PC-9 (cell line): ENCODE measurements at regions of chr2 and their contacts with region 1.

Region 1: DNA sequence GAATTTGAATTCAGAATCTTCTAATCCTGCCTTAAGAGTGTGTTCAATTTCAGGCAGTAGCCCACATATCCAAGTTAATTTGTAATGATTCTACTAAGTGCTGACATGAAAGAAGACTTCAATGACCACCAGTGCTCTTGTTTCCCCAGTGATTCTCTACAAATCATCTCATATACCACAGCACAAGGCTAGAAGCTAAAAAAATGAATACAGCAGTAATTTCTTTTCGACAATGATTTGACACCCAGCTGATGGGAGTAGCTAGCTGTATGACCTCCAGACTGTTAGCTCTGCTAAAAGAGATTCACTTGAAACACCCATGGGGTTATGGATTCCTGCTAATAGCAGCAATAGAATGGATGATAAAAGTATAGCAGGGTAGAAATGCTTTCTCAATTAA is 217.0 kb upstream of the TMEFF2 start:
- DNase-seq: no peak
- H3K4me3 ChIP-seq: no peak overlapping the region
- H3K27ac ChIP-seq: no peak overlapping the region
- H3K4me1 ChIP-seq: no peaks in the 10 kb centered on the region
- H3K27me3 ChIP-seq: no peaks in the 10 kb centered on the region
- CTCF ChIP-seq: no peak

Region 2: DNA sequence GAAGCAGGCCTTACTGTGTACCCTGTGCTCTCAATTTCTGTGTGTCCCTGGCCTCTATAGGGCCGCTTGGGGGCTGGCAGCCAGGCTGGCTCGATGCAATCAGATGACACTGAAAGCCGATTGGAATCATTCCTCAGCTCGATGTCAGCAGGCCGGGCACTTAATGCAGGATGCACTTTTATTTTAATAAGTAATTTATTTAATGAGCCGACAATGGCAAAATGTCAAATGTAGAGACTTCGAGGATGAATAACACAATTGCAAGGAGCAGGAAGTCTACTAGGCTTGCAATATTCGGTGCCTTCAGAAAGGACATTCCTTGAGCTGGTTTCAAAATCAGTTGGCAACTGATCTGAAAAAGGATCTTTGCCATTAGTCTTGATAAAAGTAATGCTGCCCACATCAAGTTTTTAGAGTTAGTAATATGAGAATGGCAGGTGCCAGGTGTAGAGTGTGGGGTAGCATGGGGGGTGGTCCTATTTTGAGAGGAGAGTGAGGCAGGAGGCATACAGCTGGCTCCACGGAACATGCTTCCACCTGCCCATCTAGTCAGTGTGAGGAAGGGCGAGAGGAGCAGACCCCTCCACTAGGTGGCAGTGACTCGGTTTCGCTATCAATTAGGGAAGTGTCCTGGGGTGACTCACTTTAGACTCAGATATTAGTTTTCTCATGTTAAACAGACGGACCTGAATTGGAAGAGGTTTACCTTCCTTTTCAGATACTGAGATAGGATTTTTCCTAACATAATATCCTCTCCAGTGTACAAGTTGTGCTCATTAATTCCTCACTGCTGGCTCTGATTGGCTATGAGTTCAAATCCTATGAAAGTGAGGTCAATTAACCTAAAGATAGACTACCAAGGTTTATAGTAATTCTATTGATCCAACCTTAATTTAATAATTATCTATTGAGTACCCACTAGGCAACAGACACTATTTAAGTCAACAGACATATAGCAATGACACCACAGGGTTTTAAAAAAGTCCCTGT is 652.9 kb before region 1 on chr2:
- CTCF ChIA-PET with region 1: no interaction called
- POLR2A ChIA-PET with region 1: no interaction called
- intact Hi-C with region 1: no loop called
- DNase-seq: peak in 1 of 2 experiments; percentile 58
- H3K4me3 ChIP-seq: no peak overlapping the region
- H3K27ac ChIP-seq: no peak overlapping the region
- H3K4me1 ChIP-seq: no peaks in the 10 kb centered on the region
- H3K27me3 ChIP-seq: no peaks in the 10 kb centered on the region
- CTCF ChIP-seq: peak; percentile 63

Region 3: GRCh38 chr2:192123847-192124246 is 287.9 kb before region 1 on chr2:
- CTCF ChIA-PET with region 1: no interaction called
- POLR2A ChIA-PET with region 1: no interaction called
- intact Hi-C with region 1: no loop called
- DNase-seq: no peak
- H3K4me3 ChIP-seq: no peak overlapping the region
- H3K27ac ChIP-seq: no peak overlapping the region
- H3K4me1 ChIP-seq: no peaks in the 10 kb centered on the region
- H3K27me3 ChIP-seq: no peaks in the 10 kb centered on the region
- CTCF ChIP-seq: no peak

Region 4: GRCh38 chr2:192390401-192390800 is 21.4 kb before region 1 on chr2:
- CTCF ChIA-PET with region 1: no interaction called
- POLR2A ChIA-PET with region 1: no interaction called
- intact Hi-C with region 1: loop called (anchors 1 kb)
- DNase-seq: no peak
- H3K4me3 ChIP-seq: no peak overlapping the region
- H3K27ac ChIP-seq: no peak overlapping the region
- H3K4me1 ChIP-seq: no peaks in the 10 kb centered on the region
- H3K27me3 ChIP-seq: no peaks in the 10 kb centered on the region
- CTCF ChIP-seq: no peak

Region 5: DNA sequence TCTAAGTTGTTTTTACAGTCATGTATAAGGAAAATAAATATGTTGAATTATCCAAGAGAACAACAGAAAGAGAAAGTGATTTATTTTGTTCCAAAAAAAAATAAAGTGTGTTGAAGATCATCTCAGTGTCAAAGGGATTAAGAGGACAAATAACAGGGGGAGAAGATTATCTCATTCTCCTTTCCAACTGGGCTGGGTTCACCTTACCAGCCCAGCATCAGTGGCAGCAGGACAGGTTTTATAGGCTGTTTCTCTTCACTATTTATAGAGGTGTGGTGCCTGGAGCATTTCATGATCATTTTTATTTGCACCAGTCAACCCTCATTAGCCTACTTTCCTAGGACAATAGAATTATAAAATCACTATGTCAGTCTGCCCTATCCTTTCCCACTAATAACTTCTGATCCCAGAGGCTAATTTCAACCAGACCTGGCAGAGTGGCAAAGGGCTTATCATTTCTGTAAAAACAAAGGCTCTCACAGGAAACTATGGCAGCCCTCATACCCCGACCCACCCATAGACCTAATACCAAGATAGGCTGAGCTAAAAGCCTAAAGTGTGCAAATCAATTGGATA is 26.4 kb after region 1 on chr2:
- CTCF ChIA-PET with region 1: no interaction called
- POLR2A ChIA-PET with region 1: no interaction called
- intact Hi-C with region 1: no loop called
- DNase-seq: no peak
- H3K4me3 ChIP-seq: no peak overlapping the region
- H3K27ac ChIP-seq: no peak overlapping the region
- H3K4me1 ChIP-seq: no peaks in the 10 kb centered on the region
- H3K27me3 ChIP-seq: no peaks in the 10 kb centered on the region
- CTCF ChIP-seq: no peak

Region 6: GRCh38 chr2:192500550-192501213 is 88.9 kb after region 1 on chr2:
- CTCF ChIA-PET with region 1: no interaction called
- POLR2A ChIA-PET with region 1: no interaction called
- intact Hi-C with region 1: no loop called
- DNase-seq: no peak
- H3K4me3 ChIP-seq: no peak overlapping the region
- H3K27ac ChIP-seq: no peak overlapping the region
- H3K4me1 ChIP-seq: no peaks in the 10 kb centered on the region
- H3K27me3 ChIP-seq: no peaks in the 10 kb centered on the region
- CTCF ChIP-seq: no peak